Activated CD4-positive, alpha-beta memory T cell treated with anti-CD3 and anti-CD28 coated beads for 36 hours (primary cell): ENCODE measurements at regions of chr9 and their contacts with region 1.

Region 1: DNA sequence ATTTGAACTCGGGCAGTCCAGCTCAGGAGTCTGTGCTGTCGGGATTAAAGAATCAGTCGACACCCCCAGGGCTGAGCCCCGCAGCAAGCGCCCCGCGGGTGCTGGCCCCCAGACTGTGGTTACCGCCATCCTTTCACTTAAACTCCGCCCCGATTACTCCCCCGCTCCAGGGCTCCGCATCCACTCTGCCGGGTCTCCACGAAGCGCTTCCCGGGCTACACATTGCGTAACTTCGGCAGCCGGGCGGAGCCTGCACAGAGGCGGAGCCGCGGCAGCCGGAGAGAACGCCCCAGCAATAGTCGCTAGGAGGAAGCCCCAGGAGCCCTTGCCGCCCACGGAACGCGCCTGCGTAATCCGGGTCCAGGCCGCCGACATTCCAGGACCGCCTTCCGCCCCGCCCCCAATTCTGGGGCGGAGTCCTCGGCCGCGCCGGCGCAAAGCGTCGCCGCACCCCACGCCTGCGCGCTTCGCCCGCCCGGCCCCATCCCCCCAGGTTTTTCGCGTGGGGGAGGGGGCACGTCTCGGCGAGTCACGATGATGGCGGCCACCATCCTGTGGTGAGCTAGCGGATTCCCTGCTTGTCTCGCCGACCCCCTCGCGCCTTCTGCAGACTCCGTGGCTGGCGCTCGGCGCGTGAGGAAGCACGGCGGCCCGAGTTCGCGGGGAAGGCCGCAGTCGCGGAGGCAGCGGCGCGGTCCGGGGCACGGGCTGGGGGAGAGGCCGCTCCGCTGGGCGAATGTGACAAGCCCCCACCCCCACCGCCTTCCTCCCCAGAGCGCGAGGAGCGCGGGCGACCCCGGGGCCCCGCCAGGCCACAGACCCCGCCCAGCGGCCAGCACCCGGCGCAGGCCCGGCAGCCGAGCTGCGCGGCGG is at the start of gene RAD23B:
- DNase-seq: peak; percentile 99
- H3K4me3 Mint-ChIP-seq: peak within 1 kb of the TSS; percentile 96
- H3K27ac Mint-ChIP-seq: peak within 1 kb of the TSS; percentile 95
- H3K4me1 Mint-ChIP-seq: peaks cover 41% of the 10 kb centered on the region
- H3K27me3 Mint-ChIP-seq: no peaks in the 10 kb centered on the region
- total RNA-seq, gene RAD23B: 111 TPM

Region 2: DNA sequence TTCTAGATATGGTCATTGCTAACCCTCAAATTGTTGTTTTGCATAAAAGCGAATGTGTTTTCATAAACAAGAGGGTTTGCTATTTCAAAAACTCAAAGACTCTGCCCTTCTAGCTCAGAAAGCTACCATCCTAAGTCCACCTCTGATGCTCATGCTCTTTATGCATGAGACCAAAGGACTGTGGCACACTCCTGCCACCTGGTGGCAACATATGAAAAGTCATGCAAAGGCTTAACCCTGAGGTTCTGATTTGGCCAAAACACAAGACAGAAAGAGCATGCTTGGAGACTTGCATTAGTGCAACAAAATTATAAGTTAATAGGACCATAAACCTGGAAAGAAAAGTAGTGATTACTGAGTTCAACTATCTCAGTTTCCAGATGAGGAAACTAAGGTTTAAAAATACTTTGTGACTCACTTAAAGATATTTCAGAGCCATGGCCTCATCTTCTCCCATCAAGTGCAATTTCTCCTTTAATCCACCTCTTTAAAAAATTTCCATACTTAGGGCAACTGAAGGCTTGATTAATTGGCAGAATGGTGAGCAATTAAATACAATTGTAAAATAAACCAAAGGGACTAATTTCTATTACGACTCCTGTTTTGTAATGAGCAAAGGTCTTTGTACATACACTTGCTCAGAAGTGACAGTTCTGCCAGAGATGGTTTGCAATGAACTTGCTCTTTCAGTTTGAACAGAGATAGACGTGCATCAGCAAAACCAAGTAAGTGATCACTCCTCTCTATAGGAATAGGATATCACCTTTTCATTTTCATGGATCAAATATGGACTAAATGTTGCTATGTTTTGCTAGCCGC is 110.6 kb before region 1 on chr9:
- CTCF ChIA-PET with region 1: interaction called, 4 read pairs
- POLR2A ChIA-PET with region 1: interaction called, 5 read pairs
- intact Hi-C with region 1: loop called (anchors 1 kb)
- DNase-seq: peak; percentile 72
- H3K4me3 Mint-ChIP-seq: no peak overlapping the region
- H3K27ac Mint-ChIP-seq: peak overlapping the region; percentile 69
- H3K4me1 Mint-ChIP-seq: peaks cover 17% of the 10 kb centered on the region
- H3K27me3 Mint-ChIP-seq: peaks cover 15% of the 10 kb centered on the region

Region 3: DNA sequence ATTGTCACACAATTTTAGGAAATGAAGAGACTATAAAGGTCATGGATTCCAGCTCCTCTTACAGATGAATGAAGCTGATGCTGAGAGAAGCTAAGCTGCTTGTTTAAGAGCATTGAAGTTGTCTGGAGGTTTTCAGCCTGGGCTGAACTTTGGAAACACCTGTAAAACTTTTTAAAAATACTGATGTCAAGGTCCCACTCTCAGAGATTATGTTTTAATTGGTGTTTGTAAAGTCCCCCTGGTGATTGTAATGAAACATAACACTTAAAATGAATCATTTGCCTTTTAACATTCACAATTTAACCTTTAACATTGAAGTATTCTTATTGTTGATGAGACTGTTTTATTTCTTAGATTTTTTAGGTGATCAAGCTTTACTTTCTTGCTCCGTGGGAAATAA is 16.4 kb after region 1 on chr9:
- CTCF ChIA-PET with region 1: interaction called, 4 read pairs
- POLR2A ChIA-PET with region 1: no interaction called
- intact Hi-C with region 1: loop called (anchors 2 kb)
- DNase-seq: no peak
- H3K4me3 Mint-ChIP-seq: no peak overlapping the region
- H3K27ac Mint-ChIP-seq: no peak overlapping the region
- H3K4me1 Mint-ChIP-seq: peaks cover 35% of the 10 kb centered on the region
- H3K27me3 Mint-ChIP-seq: no peaks in the 10 kb centered on the region

Region 4: GRCh38 chr9:107323836-107324585 is 41.0 kb after region 1 on chr9:
- CTCF ChIA-PET with region 1: no interaction called
- POLR2A ChIA-PET with region 1: no interaction called
- intact Hi-C with region 1: loop called (anchors 2 kb)
- DNase-seq: no peak
- H3K4me3 Mint-ChIP-seq: no peak overlapping the region
- H3K27ac Mint-ChIP-seq: no peak overlapping the region
- H3K4me1 Mint-ChIP-seq: peaks cover 18% of the 10 kb centered on the region
- H3K27me3 Mint-ChIP-seq: no peaks in the 10 kb centered on the region

Region 5: GRCh38 chr9:109012876-109013678 is 1730.1 kb after region 1 on chr9 and contains the start of gene CTNNAL1:
- CTCF ChIA-PET with region 1: no interaction called
- POLR2A ChIA-PET with region 1: no interaction called
- intact Hi-C with region 1: loop called (anchors 5 kb)
- DNase-seq: peak; percentile 91
- H3K4me3 Mint-ChIP-seq: peak within 1 kb of the TSS; percentile 86
- H3K27ac Mint-ChIP-seq: peak within 1 kb of the TSS; percentile 68
- H3K4me1 Mint-ChIP-seq: peaks cover 25% of the 10 kb centered on the region
- H3K27me3 Mint-ChIP-seq: peaks cover 2% of the 10 kb centered on the region
- total RNA-seq, gene CTNNAL1: 23.2 to 25.9 TPM